Activated CD4-positive, alpha-beta T cell treated with anti-CD3 and anti-CD28 coated beads for 36 hours (primary cell): ENCODE measurements at regions of chr16 and their contacts with region 1.

Region 1: GRCh38 chr16:88452482-88453216 is 431 bp upstream of the ZFPM1 start:
- DNase-seq: peak; percentile 100
- ATAC-seq: peak; percentile 68
- H3K4me3 Mint-ChIP-seq: peak overlapping the region; percentile 74
- H3K27ac Mint-ChIP-seq: peak overlapping the region; percentile 78
- H3K4me1 Mint-ChIP-seq: peaks cover 24% of the 10 kb centered on the region
- H3K27me3 Mint-ChIP-seq: no peaks in the 10 kb centered on the region

Region 2: DNA sequence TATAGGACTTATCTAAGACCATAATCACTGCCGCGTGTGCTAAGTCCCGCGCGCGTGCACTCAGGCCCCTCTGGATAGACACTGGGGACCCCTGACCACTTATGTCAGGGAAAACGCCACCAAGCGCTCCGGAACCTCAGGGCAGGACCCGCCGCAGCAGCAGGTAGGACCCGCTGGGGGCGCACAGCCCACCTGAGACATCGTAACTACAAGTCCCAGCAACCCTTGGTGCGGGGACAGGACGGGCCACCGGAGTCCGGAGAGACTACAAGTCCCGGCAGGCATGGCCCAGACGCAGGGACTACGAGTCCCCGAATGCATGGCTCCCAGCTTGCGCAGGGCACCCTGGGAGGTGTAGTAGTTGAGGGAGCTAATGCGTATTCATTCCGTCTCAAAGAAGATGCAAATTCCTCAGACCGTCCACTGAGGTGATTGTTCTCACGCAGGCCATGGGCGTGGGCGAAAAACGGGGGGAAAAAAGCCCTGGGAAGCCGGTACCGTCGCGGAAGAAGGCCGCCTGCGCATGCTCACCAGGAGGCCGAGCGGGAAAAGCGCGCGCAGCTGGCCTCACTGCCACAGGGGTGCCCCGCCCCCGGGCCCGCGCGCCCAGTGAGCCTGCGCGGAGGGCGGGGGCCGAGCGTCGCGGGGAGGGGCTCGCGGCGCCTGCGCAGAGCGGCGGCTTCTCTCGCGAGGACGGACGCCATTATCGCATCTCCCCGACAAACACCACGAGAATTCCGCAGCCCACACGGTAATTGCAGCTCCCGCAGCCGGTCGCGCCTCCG is 501.7 kb before region 1 on chr16 and contains the start of gene BANP:
- CTCF ChIA-PET with region 1: no interaction called
- POLR2A ChIA-PET with region 1: no interaction called
- intact Hi-C with region 1: loop called in 1 of 2 experiments (anchors 1 kb)
- DNase-seq: peak; percentile 98
- ATAC-seq: peak; percentile 96
- H3K4me3 Mint-ChIP-seq: peak within 1 kb of the TSS; percentile 93
- H3K27ac Mint-ChIP-seq: peak within 1 kb of the TSS; percentile 100
- H3K4me1 Mint-ChIP-seq: peaks cover 47% of the 10 kb centered on the region
- H3K27me3 Mint-ChIP-seq: no peaks in the 10 kb centered on the region
- total RNA-seq, gene BANP: 35.2 to 36.1 TPM

Region 3: DNA sequence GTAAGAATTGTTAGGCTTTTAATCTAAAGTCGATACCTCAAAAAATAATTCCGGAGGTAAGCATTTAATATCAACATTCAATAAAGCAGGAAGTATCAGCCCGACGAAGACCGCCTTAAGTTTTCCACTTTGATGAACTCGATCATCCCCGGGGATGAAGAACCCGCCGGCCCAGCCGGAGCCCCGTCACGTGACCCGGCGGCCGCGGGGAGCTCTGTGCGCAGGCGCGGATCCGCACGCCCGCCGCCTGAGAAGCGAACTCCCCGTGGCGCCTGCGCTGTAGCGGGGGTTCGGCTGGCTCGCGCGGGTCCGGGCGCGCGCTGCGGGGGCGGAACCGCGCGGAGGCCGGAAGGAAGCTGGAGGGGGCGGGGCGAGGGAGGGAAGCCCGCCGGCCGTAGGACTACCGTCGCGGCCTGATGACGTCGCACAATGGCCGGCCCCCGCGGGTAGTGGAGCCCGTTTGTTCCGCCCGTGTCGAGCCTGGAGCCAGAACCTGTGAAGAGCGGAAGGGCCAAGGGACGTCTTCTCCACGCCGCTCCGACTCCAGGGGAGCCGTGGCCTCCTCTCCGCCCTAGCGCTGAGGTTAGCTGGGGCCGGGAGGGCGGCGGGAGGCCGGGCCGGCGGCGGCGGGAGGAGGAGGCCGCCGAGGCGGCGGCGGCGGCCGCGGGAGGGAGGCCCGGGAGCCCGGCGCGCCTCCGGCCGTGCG is 117.5 kb after region 1 on chr16 and contains the start of gene ZC3H18:
- CTCF ChIA-PET with region 1: no interaction called
- POLR2A ChIA-PET with region 1: interaction called, 5 read pairs
- intact Hi-C with region 1: loop called (anchors 1 to 5 kb)
- DNase-seq: peak; percentile 99
- ATAC-seq: peak; percentile 83
- H3K4me3 Mint-ChIP-seq: peak within 1 kb of the TSS; percentile 88
- H3K27ac Mint-ChIP-seq: peak within 1 kb of the TSS; percentile 79
- H3K4me1 Mint-ChIP-seq: peaks cover 44% of the 10 kb centered on the region
- H3K27me3 Mint-ChIP-seq: no peaks in the 10 kb centered on the region
- total RNA-seq, gene ZC3H18: 70.0 to 76.4 TPM

Region 4: GRCh38 chr16:88706288-88706964 is 253.8 kb after region 1 on chr16 and contains the starts of genes CTU2 and RNF166:
- CTCF ChIA-PET with region 1: no interaction called
- POLR2A ChIA-PET with region 1: no interaction called
- intact Hi-C with region 1: loop called in 1 of 2 experiments (anchors 1 kb)
- DNase-seq: peak; percentile 96
- ATAC-seq: peak; percentile 59
- H3K4me3 Mint-ChIP-seq: peak within 1 kb of the TSS; percentile 92
- H3K27ac Mint-ChIP-seq: peak within 1 kb of the TSS; percentile 92
- H3K4me1 Mint-ChIP-seq: peaks cover 43% of the 10 kb centered on the region
- H3K27me3 Mint-ChIP-seq: no peaks in the 10 kb centered on the region
- total RNA-seq, gene CTU2: 29.6 to 36.2 TPM
- total RNA-seq, gene RNF166: 44.0 to 49.7 TPM

Region 5: GRCh38 chr16:89099905-89100304 is 647.3 kb after region 1 on chr16:
- CTCF ChIA-PET with region 1: no interaction called
- POLR2A ChIA-PET with region 1: no interaction called
- intact Hi-C with region 1: loop called in 1 of 2 experiments (anchors 5 kb)
- DNase-seq: peak; percentile 63
- ATAC-seq: no peak
- H3K4me3 Mint-ChIP-seq: peak overlapping the region; percentile 36
- H3K27ac Mint-ChIP-seq: peak overlapping the region; percentile 85
- H3K4me1 Mint-ChIP-seq: peaks cover 76% of the 10 kb centered on the region
- H3K27me3 Mint-ChIP-seq: no peaks in the 10 kb centered on the region

Region 6: DNA sequence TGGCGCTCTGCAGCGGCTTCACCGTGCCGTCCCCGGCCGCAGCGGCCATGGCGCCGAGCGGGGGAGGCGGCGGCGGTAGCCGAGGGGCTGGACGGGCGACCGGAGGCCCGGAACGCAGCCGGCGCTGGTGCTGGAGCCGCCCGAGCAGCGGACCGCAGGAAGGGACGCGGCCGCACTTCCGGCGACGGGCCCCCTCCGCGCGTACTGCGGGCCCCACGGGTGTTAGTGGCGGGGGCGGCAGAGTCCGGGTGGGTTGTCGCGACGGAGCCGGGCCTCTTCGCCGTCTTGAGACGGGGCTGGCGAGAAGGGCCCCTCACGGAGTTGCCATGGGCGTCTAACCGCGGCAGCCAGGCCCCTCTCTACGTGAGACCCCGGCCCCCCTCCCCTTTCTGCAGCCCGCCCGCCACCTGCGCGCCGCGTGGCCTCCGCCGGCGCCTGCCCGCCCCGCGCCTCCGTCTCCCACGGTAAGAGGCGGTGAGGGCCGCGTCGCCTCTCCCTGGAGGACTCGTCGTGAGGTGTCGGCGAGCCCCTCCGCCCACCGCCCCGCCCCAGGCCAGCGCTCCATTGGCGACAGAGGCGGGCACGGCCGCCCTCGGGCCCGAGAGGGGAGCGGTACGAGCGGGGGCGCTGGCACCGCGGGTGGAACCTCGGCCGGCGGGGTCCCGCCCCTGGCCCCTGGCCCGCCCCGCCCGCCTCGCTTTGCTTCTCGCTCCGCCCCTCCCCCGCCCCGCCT is 1268.3 kb after region 1 on chr16 and contains the starts of genes VPS9D1 and ZNF276:
- CTCF ChIA-PET with region 1: no interaction called
- POLR2A ChIA-PET with region 1: no interaction called
- intact Hi-C with region 1: loop called in 1 of 2 experiments (anchors 10 kb)
- DNase-seq: peak; percentile 92
- ATAC-seq: peak; percentile 49
- H3K4me3 Mint-ChIP-seq: peak within 1 kb of the TSS; percentile 85
- H3K27ac Mint-ChIP-seq: peak within 1 kb of the TSS; percentile 84
- H3K4me1 Mint-ChIP-seq: peaks cover 40% of the 10 kb centered on the region
- H3K27me3 Mint-ChIP-seq: no peaks in the 10 kb centered on the region
- total RNA-seq, gene VPS9D1: 2.0 to 2.6 TPM
- total RNA-seq, gene ZNF276: 21.3 to 24.8 TPM